Gastrocnemius medialis (tissue), 4 donors: ENCODE measurements at regions of chr15 and their contacts with region 1.

Region 1: GRCh38 chr15:72758182-72758581 is 25.4 kb downstream of the ADPGK start:
- DNase-seq: no peak
- ATAC-seq: no peak
- H3K4me3 ChIP-seq: no peak overlapping the region
- H3K27ac ChIP-seq: no peak overlapping the region
- H3K4me1 ChIP-seq: no peaks in the 10 kb centered on the region
- H3K27me3 ChIP-seq: no peaks in the 10 kb centered on the region
- CTCF ChIP-seq: no peak
- POLR2A ChIP-seq: no peak

Region 2: GRCh38 chr15:72825834-72826402 is 67.7 kb after region 1 on chr15:
- in situ Hi-C with region 1: no loop called
- intact Hi-C with region 1: no loop called
- DNase-seq: no peak
- ATAC-seq: no peak
- H3K4me3 ChIP-seq: no peak overlapping the region
- H3K27ac ChIP-seq: peak overlapping the region in 2 of 4 donors; percentile 76 to 84
- H3K4me1 ChIP-seq: peaks cover 3 to 8% of the 10 kb centered on the region in 2 donors
- H3K27me3 ChIP-seq: no peaks in the 10 kb centered on the region
- CTCF ChIP-seq: no peak
- POLR2A ChIP-seq: no peak

Region 3: GRCh38 chr15:73284090-73284716 is 526.0 kb after region 1 on chr15:
- in situ Hi-C with region 1: loop called in 1 of 4 experiments (anchors 25 kb)
- intact Hi-C with region 1: no loop called
- DNase-seq: no peak
- ATAC-seq: no peak
- H3K4me3 ChIP-seq: no peak overlapping the region
- H3K27ac ChIP-seq: peak overlapping the region in 1 of 4 donors; percentile 28
- H3K4me1 ChIP-seq: peaks cover 0 to 16% of the 10 kb centered on the region in 2 donors
- H3K27me3 ChIP-seq: no peaks in the 10 kb centered on the region
- CTCF ChIP-seq: no peak
- POLR2A ChIP-seq: no peak